CD4-positive, alpha-beta memory T cell (primary cell): ENCODE measurements at regions of chr6 and their contacts with region 1.

Region 1: DNA sequence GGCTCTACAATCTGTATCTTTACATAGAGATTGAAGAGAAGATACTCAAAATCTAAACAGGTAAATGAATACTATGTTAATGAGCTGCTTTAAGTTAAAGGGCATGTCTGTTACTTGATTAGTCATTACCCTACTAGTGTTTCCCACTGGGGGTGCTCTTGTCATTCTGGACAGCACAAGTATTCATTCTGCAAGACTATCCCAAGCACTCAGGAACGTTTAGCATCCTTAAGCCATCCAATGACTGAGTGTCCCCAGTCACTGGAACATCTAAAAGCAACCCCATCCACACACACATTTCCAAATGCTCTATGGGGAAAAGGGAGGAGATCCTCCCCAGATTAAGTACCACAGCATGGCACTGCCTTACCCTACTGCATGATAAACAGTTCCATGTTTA is 25.7 kb downstream of the EZR start:
- DNase-seq: peak in 3 of 5 donors; percentile 44 to 53 (median 46)
- H3K4me3 ChIP-seq: no peak overlapping the region
- H3K4me3 Mint-ChIP-seq: peak overlapping the region in 4 of 8 donors; percentile 19 to 67 (median 36)
- H3K27ac ChIP-seq: no peak overlapping the region
- H3K27ac Mint-ChIP-seq: peak overlapping the region; percentile 3 to 90 (median 77)
- H3K4me1 ChIP-seq: peaks cover 97% of the 10 kb centered on the region
- H3K4me1 Mint-ChIP-seq: peaks cover 66 to 91% (median 81%) of the 10 kb centered on the region in 4 donors
- H3K27me3 ChIP-seq: no peaks in the 10 kb centered on the region
- H3K27me3 Mint-ChIP-seq: no peaks in the 10 kb centered on the region

Region 2: GRCh38 chr6:158344534-158344933 is 448.9 kb before region 1 on chr6:
- CTCF ChIA-PET with region 1: no interaction called
- POLR2A ChIA-PET with region 1: no interaction called
- intact Hi-C with region 1: no loop called
- DNase-seq: no peak
- H3K4me3 ChIP-seq: no peak overlapping the region
- H3K4me3 Mint-ChIP-seq: no peak overlapping the region
- H3K27ac ChIP-seq: no peak overlapping the region
- H3K27ac Mint-ChIP-seq: peak overlapping the region in 1 of 7 donors; percentile 52
- H3K4me1 ChIP-seq: no peaks in the 10 kb centered on the region
- H3K4me1 Mint-ChIP-seq: peaks cover 0 to 11% (median 6%) of the 10 kb centered on the region in 4 donors
- H3K27me3 ChIP-seq: no peaks in the 10 kb centered on the region
- H3K27me3 Mint-ChIP-seq: no peaks in the 10 kb centered on the region

Region 3: GRCh38 chr6:158666628-158667359 is 126.6 kb before region 1 on chr6:
- CTCF ChIA-PET with region 1: no interaction called
- POLR2A ChIA-PET with region 1: no interaction called
- intact Hi-C with region 1: no loop called
- DNase-seq: no peak
- H3K4me3 ChIP-seq: no peak overlapping the region
- H3K4me3 Mint-ChIP-seq: no peak overlapping the region
- H3K27ac ChIP-seq: no peak overlapping the region
- H3K27ac Mint-ChIP-seq: peak overlapping the region in 3 of 7 donors; percentile 23 to 37 (median 24)
- H3K4me1 ChIP-seq: no peaks in the 10 kb centered on the region
- H3K4me1 Mint-ChIP-seq: peaks cover 4 to 7% (median 6%) of the 10 kb centered on the region in 4 donors
- H3K27me3 ChIP-seq: no peaks in the 10 kb centered on the region
- H3K27me3 Mint-ChIP-seq: no peaks in the 10 kb centered on the region

Region 4: GRCh38 chr6:158704181-158704822 is 89.1 kb before region 1 on chr6:
- CTCF ChIA-PET with region 1: interaction called, 8 read pairs
- POLR2A ChIA-PET with region 1: interaction called, 3 read pairs
- intact Hi-C with region 1: loop called (anchors 2 kb)
- DNase-seq: peak; percentile 67 to 82 (median 72)
- H3K4me3 ChIP-seq: peak overlapping the region; percentile 39 to 57
- H3K4me3 Mint-ChIP-seq: peak overlapping the region; percentile 82 to 89 (median 83)
- H3K27ac ChIP-seq: no peak overlapping the region
- H3K27ac Mint-ChIP-seq: peak overlapping the region; percentile 41 to 90 (median 79)
- H3K4me1 ChIP-seq: peaks cover 10% of the 10 kb centered on the region
- H3K4me1 Mint-ChIP-seq: peaks cover 9 to 21% (median 15%) of the 10 kb centered on the region in 4 donors
- H3K27me3 ChIP-seq: no peaks in the 10 kb centered on the region
- H3K27me3 Mint-ChIP-seq: no peaks in the 10 kb centered on the region

Region 5: GRCh38 chr6:158772851-158773371 is 20.5 kb before region 1 on chr6:
- CTCF ChIA-PET with region 1: interaction called, 10 read pairs
- POLR2A ChIA-PET with region 1: interaction called, 3 read pairs
- intact Hi-C with region 1: no loop called
- DNase-seq: no peak
- H3K4me3 ChIP-seq: no peak overlapping the region
- H3K4me3 Mint-ChIP-seq: peak overlapping the region in 6 of 8 donors; percentile 49 to 73 (median 55)
- H3K27ac ChIP-seq: peak overlapping the region; percentile 29
- H3K27ac Mint-ChIP-seq: peak overlapping the region; percentile 90 to 94 (median 91)
- H3K4me1 ChIP-seq: peaks cover 42% of the 10 kb centered on the region
- H3K4me1 Mint-ChIP-seq: peaks cover 40 to 80% (median 52%) of the 10 kb centered on the region in 4 donors
- H3K27me3 ChIP-seq: no peaks in the 10 kb centered on the region
- H3K27me3 Mint-ChIP-seq: no peaks in the 10 kb centered on the region

Region 6: DNA sequence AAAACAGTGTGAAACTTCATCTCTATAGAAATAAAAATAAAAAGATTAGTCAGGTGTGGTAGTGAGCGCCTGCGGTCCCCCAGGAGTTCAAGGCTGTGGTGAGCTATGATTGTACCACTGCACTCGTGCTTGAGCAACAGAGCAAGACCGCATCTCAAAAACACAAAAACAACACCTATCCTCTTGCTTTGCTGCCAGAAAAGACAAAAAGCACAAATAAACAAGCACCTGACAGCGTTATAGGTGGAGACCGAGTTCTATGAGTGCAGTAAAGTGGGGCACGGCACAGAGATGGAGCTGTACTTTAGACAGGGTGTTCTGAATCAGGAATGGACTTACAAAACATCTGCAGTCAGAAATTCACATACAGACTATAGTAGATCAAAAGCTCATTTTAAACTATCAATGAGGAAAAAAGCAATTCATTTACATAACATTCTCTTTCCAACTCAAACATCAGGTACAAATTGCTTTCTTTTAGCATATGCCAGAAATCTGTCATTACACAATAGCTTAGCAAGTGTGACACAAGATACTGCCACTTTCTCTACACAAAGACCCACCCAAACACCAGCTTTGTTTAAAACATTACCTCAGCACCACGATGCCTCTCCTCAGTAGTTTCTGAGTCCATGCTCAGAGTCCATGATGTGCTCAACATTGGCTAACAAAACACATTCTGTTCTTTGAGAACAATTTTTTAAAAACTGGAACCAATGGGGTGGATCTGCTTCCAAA is 15.7 kb after region 1 on chr6:
- CTCF ChIA-PET with region 1: interaction called, 17 read pairs
- POLR2A ChIA-PET with region 1: interaction called, 119 read pairs
- intact Hi-C with region 1: loop called (anchors 2 kb)
- DNase-seq: peak; percentile 56 to 72 (median 71)
- H3K4me3 ChIP-seq: peak overlapping the region in 1 of 2 donors; percentile 10
- H3K4me3 Mint-ChIP-seq: peak overlapping the region; percentile 45 to 80 (median 64)
- H3K27ac ChIP-seq: peak overlapping the region; percentile 3
- H3K27ac Mint-ChIP-seq: peak overlapping the region; percentile 81 to 96 (median 88)
- H3K4me1 ChIP-seq: peaks cover 100% of the 10 kb centered on the region
- H3K4me1 Mint-ChIP-seq: peaks cover 86 to 99% (median 92%) of the 10 kb centered on the region in 4 donors
- H3K27me3 ChIP-seq: no peaks in the 10 kb centered on the region
- H3K27me3 Mint-ChIP-seq: no peaks in the 10 kb centered on the region

Region 7: GRCh38 chr6:158853072-158853871 is 59.8 kb after region 1 on chr6:
- CTCF ChIA-PET with region 1: interaction called, 8 read pairs
- POLR2A ChIA-PET with region 1: interaction called, 18 read pairs
- intact Hi-C with region 1: loop called (anchors 1 kb)
- DNase-seq: peak; percentile 87 to 97 (median 93)
- H3K4me3 ChIP-seq: peak overlapping the region; percentile 53 to 81
- H3K4me3 Mint-ChIP-seq: no peak overlapping the region
- H3K27ac ChIP-seq: peak overlapping the region; percentile 91
- H3K27ac Mint-ChIP-seq: no peak overlapping the region
- H3K4me1 ChIP-seq: peaks cover 74% of the 10 kb centered on the region
- H3K4me1 Mint-ChIP-seq: peaks cover 27 to 37% (median 29%) of the 10 kb centered on the region in 4 donors
- H3K27me3 ChIP-seq: no peaks in the 10 kb centered on the region
- H3K27me3 Mint-ChIP-seq: no peaks in the 10 kb centered on the region

Region 8: DNA sequence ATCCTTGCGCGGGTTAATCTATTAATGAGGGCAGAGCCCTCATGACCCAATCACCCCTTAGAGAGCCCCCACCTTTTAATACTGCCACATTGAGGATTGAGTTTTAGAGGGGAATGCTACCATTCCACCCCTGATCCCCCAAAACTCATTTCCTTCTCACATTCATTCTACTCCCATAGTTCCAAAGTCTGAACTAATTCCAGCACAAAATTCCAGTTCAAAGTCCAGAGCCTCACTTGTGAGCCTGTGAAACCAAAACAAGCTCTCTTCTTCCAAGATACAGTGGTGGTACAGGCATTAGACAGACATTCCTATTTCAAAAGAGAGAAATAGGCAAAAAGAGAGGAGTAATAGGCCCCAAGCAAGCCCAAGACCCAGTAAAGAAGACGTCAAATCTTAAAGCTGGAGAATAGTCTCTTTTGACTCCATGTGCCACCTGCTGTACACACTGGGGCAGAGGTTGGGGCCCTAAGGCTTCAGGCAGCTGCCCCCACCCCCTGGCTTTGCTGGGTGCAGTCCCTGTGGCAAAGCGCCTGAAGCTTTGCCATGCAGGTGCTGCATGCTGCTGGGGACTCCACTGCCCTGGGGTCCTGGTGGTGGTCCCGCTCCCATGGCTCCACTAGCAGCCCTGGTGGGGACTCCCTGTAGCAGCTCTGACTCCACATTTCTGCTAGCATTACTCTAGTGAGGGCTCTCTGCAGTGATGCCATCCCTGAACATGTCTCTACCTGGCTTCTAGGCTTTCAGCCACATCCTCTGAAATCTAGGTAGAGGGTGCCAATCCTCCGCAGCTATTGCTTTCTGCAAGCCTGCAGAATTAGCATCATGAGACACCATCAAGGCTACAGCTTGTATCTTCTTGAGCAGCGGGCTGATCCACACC is 165.3 kb after region 1 on chr6:
- CTCF ChIA-PET with region 1: interaction called, 13 read pairs
- POLR2A ChIA-PET with region 1: interaction called, 7 read pairs
- intact Hi-C with region 1: loop called (anchors 1 kb)
- DNase-seq: peak in 4 of 5 donors; percentile 13 to 26 (median 24)
- H3K4me3 ChIP-seq: no peak overlapping the region
- H3K4me3 Mint-ChIP-seq: no peak overlapping the region
- H3K27ac ChIP-seq: no peak overlapping the region
- H3K27ac Mint-ChIP-seq: peak overlapping the region in 3 of 7 donors; percentile 1 to 59 (median 52)
- H3K4me1 ChIP-seq: no peaks in the 10 kb centered on the region
- H3K4me1 Mint-ChIP-seq: peaks cover 0 to 13% (median 0%) of the 10 kb centered on the region in 4 donors
- H3K27me3 ChIP-seq: no peaks in the 10 kb centered on the region
- H3K27me3 Mint-ChIP-seq: no peaks in the 10 kb centered on the region

Region 9: GRCh38 chr6:159042003-159042825 is 248.8 kb after region 1 on chr6:
- CTCF ChIA-PET with region 1: no interaction called
- POLR2A ChIA-PET with region 1: no interaction called
- intact Hi-C with region 1: no loop called
- DNase-seq: peak; percentile 90 to 96 (median 93)
- H3K4me3 ChIP-seq: peak overlapping the region; percentile 77 to 79
- H3K4me3 Mint-ChIP-seq: peak overlapping the region; percentile 99 to 100 (median 100)
- H3K27ac ChIP-seq: peak overlapping the region; percentile 82
- H3K27ac Mint-ChIP-seq: peak overlapping the region; percentile 98 to 100 (median 99)
- H3K4me1 ChIP-seq: peaks cover 66% of the 10 kb centered on the region
- H3K4me1 Mint-ChIP-seq: peaks cover 45 to 88% (median 59%) of the 10 kb centered on the region in 4 donors
- H3K27me3 ChIP-seq: no peaks in the 10 kb centered on the region
- H3K27me3 Mint-ChIP-seq: peaks cover 0 to 2% of the 10 kb centered on the region in 2 donors

Region 10: DNA sequence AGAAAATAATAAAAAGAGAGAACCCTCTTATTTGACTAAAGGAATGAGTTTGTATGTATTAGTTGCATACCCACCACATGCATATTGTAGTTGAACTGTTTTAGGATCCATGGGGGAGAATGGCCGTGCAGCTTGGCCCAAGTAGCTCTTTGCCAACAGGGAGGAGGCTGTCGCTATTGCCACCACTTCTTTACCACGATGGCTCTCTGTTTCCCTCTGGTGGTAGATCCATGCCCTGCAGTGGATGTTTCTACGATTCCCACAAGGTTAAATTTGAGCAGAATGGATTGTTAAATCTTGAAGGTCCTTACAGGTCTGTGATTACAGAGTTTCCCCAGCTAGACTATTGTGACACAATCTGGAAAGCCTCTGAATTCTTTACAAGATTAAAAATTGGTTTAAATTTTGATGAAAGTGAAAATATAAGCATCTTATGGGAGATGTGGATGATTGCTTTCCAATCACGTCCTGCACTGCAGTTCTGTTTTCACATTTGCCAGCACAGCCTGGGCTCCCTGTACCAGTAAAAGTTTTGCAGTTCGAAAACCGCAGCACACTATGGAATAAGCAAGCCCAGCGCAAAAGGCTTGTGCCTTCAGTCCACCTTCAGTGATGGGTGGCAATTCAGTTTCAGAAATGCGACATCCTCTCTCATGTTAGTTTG is 341.4 kb after region 1 on chr6:
- CTCF ChIA-PET with region 1: interaction called, 6 read pairs
- POLR2A ChIA-PET with region 1: no interaction called
- intact Hi-C with region 1: loop called (anchors 10 kb)
- DNase-seq: peak; percentile 69 to 77 (median 73)
- H3K4me3 ChIP-seq: no peak overlapping the region
- H3K4me3 Mint-ChIP-seq: no peak overlapping the region
- H3K27ac ChIP-seq: no peak overlapping the region
- H3K27ac Mint-ChIP-seq: no peak overlapping the region
- H3K4me1 ChIP-seq: peaks cover 6% of the 10 kb centered on the region
- H3K4me1 Mint-ChIP-seq: peaks cover 0 to 6% (median 4%) of the 10 kb centered on the region in 4 donors
- H3K27me3 ChIP-seq: no peaks in the 10 kb centered on the region
- H3K27me3 Mint-ChIP-seq: peaks cover 5 to 8% of the 10 kb centered on the region in 2 donors